Stomach (tissue), 19 donors: ENCODE measurements at regions of chr12 and their contacts with region 1.

Region 1: DNA sequence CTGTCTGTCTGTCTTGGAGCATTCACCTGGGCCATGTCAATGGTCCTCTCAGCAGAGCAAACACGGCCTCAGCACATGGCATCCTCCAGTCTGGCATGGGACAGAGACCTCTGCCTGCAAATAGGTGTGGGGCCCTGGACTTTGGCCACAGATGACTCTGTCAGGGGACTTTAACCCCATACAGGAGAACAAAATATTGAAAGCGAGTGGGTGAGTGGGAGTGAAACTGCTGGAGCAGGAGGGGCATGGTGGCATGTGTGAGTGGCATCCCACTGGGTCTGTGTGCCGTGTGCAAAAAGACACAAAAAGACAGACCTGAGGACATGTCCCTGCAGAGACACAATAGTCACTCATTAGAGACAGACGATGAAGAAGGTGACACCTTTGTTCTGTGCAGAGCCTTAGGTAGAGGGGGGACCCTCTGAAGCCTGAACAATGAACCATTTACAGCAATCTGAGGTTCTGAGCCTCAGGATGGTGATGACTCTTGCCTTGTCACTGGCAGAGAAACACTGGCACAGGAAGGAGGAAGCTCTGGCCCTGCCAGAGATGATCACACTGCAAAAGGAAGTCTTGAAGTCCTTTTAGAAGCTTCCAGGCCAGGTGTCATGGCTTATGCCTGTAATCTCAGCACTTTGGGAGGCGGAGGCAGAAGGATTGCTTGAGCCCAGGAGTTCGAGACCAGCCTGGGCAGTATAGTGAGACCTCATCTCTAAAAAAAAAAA is 7.5 kb downstream of the LAG3 start:
- DNase-seq: no peak
- H3K4me3 ChIP-seq: no peak overlapping the region
- H3K27ac ChIP-seq: peak overlapping the region in 1 of 5 donors; percentile 82
- H3K4me1 ChIP-seq: peaks cover 15 to 43% (median 32%) of the 10 kb centered on the region in 4 donors
- H3K27me3 ChIP-seq: peaks cover 0 to 9% (median 0%) of the 10 kb centered on the region in 3 donors
- CTCF ChIP-seq: no peak
- EP300 ChIP-seq: no peak
- POLR2A ChIP-seq: no peak

Region 2: DNA sequence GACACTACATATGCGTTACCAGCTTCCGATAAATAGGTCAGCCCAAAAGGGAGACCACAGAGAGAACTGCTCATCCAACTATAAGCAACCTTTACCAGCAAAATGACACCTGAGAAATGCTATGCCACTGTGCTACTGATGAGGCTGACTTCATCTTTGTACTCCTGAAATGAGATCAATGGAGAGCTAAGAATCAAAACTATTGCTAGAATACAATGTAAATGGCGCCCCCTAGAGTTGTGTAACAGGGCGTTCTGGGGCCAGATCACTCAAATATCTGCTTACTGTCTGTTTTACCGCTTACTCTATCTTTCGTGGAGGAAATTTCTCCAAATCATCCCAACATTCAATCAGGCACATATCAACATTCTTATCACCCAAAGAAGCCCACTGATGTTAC is 95.3 kb before region 1 on chr12:
- intact Hi-C with region 1: no loop called
- DNase-seq: peak in 1 of 2 donors; percentile 51
- H3K4me3 ChIP-seq: no peak overlapping the region
- H3K27ac ChIP-seq: no peak overlapping the region
- H3K4me1 ChIP-seq: peaks cover 21 to 64% (median 48%) of the 10 kb centered on the region in 4 donors
- H3K27me3 ChIP-seq: no peaks in the 10 kb centered on the region
- CTCF ChIP-seq: peak in 3 of 7 experiments; percentile 20 to 33 (median 31)
- EP300 ChIP-seq: no peak
- POLR2A ChIP-seq: no peak

Region 3: GRCh38 chr12:6735448-6736191 is 44.2 kb before region 1 on chr12:
- intact Hi-C with region 1: loop called (anchors 5 kb)
- DNase-seq: peak; percentile 77 to 86
- H3K4me3 ChIP-seq: no peak overlapping the region
- H3K27ac ChIP-seq: peak overlapping the region in 2 of 5 donors; percentile 25 to 50
- H3K4me1 ChIP-seq: peaks cover 0 to 10% (median 5%) of the 10 kb centered on the region in 4 donors
- H3K27me3 ChIP-seq: no peaks in the 10 kb centered on the region
- CTCF ChIP-seq: peak in 5 of 7 experiments; percentile 38 to 80 (median 61)
- EP300 ChIP-seq: no peak
- POLR2A ChIP-seq: no peak

Region 4: DNA sequence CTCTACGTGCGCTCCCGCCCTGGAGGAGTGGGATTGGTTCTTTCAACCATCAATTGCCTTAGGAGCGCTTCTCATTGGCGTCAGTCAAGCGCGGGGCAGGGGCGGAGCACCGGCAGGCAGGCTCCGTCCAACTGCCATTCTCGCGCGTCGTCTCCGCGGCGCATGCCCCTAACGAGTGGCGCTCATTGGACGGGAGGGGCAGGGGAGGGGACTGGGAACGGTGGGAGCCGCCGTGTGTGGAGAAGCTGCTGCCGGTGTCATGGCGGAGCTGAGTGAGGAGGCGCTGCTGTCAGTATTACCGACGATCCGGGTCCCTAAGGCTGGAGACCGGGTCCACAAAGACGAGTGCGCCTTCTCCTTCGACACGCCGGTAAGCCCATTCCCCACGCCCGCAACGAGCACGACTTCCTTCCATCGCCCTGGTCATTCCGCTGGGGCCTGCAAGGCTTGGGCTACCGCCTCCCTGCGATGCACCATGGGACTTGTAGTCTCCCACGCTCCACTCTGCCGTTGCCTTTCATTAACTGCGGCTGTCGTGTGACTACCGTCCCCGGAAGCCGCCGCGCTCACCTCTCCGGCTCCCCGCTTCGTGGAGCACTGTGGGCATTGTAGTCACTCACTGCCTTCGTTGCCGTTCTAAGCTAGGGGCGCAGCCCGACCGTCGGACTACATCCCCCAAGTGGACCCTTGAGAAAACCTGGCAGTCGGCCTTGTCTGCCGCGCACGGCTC is 72.2 kb after region 1 on chr12 and contains the start of gene USP5:
- intact Hi-C with region 1: no loop called
- DNase-seq: peak; percentile 99 to 100
- H3K4me3 ChIP-seq: peak within 1 kb of the TSS; percentile 66 to 84 (median 66)
- H3K27ac ChIP-seq: peak within 1 kb of the TSS; percentile 88 to 96 (median 95)
- H3K4me1 ChIP-seq: peaks cover 9 to 37% (median 25%) of the 10 kb centered on the region in 4 donors
- H3K27me3 ChIP-seq: no peaks in the 10 kb centered on the region
- CTCF ChIP-seq: peak in 1 of 7 experiments; percentile 25
- EP300 ChIP-seq: no peak
- POLR2A ChIP-seq: no peak
- total RNA-seq, gene USP5: 26.3 to 69.4 (median 48.7) TPM